GM12878 (cell line): ENCODE measurements at regions of chr4 and their contacts with region 1.

Region 1: DNA sequence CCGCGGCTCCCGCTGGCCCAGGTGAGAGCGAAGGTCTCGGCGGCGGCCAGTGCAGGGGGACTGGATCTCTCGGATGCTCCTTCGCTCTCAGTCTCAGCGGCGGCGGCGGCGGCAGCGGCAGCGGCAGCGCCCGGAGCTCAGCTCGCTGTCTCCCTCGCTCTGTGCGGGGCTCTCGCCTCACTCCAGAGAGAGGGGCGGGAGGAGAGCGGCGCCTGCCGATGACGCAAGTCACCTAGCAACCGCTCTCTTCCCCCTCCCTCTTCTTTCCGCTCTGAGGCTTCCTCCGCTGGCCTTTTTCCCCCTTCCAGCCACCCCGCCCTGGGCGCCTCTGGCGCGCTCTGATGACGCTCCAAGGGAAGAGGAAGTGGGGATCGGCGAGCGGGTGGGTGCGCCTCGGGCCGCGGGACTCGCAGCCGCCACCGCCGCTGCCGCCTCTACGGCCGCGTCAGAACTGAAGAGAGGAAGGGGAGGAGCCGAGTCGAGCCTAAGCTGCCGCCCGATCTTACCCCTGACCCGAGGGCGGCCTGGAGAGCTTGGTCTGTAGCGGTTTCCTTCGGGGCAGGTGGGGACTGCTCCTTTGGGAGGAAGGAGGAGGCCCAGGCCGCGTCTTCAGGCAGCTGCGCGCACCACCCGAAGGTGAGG is at the start of gene FBXW7:
- DNase-seq: peak; percentile 98
- ATAC-seq: peak; percentile 84
- H3K4me3 ChIP-seq: peak within 1 kb of the TSS; percentile 92
- H3K27ac ChIP-seq: peak within 1 kb of the TSS; percentile 96
- H3K4me1 ChIP-seq: peaks cover 21% of the 10 kb centered on the region
- H3K27me3 ChIP-seq: no peaks in the 10 kb centered on the region
- CTCF ChIP-seq: no peak
- EP300 ChIP-seq: peak in 1 of 2 experiments; percentile 75; a peak in 3 of 4 replicates
- POLR2A ChIP-seq: peak; percentile 90
- RAD21 ChIP-seq: no peak
- polyA plus RNA-seq, gene FBXW7: 40.2 to 42.5 TPM

Region 2: DNA sequence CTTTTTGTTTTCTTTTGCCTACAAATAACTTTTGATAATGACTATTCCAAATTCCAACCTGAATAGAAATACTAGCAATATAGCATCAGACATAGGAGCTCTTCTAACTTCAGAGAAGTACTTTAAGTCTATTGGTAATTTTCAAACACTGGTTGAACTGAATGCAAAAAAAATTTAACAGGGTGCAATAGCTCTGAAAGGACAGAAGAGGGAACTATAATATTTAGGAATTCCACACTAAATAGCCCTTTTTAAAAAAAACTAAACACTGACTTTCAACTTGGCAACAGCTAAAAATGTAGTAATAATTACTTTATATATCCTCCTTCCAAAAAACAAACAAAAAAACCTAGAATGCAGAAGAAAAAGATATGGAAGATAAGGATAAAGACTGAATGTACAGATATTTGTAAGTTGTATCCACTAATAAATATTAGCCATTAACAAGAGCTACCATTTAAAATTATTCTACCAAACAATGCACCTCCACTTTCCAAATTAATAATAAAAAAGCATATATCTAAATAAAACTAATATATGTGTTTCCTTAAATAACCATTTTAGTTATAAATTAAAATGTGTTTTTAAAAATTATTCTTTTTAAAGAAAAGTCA is 81.5 kb before region 1 on chr4:
- CTCF ChIA-PET with region 1: interaction called, 13 read pairs
- POLR2A ChIA-PET with region 1: interaction called, 7 read pairs
- RAD21 ChIA-PET with region 1: interaction called, 7 read pairs
- SMC1A ChIA-PET with region 1: interaction called, 17 read pairs
- in situ Hi-C with region 1: no loop called
- intact Hi-C with region 1: loop called (anchors 5 kb)
- DNase-seq: no peak
- ATAC-seq: peak; percentile 15; the same call in 2 of the 3 replicates
- H3K4me3 ChIP-seq: no peak overlapping the region
- H3K27ac ChIP-seq: no peak overlapping the region
- H3K4me1 ChIP-seq: peaks cover 12% of the 10 kb centered on the region
- H3K27me3 ChIP-seq: no peaks in the 10 kb centered on the region
- CTCF ChIP-seq: peak; percentile 50 to 60 (median 60)
- EP300 ChIP-seq: no peak
- POLR2A ChIP-seq: no peak
- RAD21 ChIP-seq: peak; percentile 65

Region 3: DNA sequence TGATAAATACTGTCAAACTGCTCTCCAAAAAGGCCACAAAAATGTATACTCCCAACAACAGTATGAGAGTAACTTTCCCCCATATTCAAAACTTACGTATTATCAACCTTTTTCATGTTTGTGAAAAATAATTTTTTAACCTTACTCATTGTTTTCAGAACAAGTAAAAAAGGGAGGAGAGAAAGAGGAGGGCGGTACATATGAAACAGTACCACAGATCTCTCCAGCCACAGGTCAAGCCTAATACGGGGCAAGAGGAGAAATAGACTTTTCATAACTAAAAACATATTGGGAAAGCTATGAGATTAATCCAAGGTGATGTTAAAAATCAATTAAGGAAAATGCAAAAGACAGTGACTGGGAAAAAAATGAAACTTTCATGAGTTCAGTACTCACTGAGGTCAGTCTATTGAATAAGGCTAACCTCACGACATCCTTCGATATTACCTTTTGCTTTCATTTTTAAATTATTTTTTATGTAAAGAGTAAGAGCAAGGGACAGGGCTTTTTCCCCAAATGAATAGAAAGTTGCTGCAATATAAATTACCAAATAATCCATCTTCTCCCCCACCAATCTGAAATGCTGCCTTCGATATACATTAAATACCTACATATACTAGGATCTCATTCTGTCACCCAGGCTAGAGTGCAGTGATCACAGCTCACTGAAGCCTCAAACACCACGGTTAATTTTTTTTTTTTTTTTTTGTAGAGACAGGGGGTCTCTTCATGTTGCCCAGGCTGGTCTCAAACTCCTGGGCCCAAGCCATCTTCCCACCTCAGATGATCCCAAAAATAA is 25.5 kb before region 1 on chr4:
- CTCF ChIA-PET with region 1: interaction called, 4 read pairs
- POLR2A ChIA-PET with region 1: interaction called, 93 read pairs
- RAD21 ChIA-PET with region 1: interaction called, 224 read pairs
- SMC1A ChIA-PET with region 1: interaction called, 197 read pairs
- in situ Hi-C with region 1: no loop called
- intact Hi-C with region 1: no loop called
- DNase-seq: no peak
- ATAC-seq: peak; percentile 71
- H3K4me3 ChIP-seq: peak overlapping the region; percentile 61; the same call in 1 of the 2 replicates
- H3K27ac ChIP-seq: peak overlapping the region; percentile 74
- H3K4me1 ChIP-seq: peaks cover 24% of the 10 kb centered on the region
- H3K27me3 ChIP-seq: no peaks in the 10 kb centered on the region
- CTCF ChIP-seq: no peak
- EP300 ChIP-seq: no peak
- POLR2A ChIP-seq: no peak
- RAD21 ChIP-seq: no peak

Region 4: DNA sequence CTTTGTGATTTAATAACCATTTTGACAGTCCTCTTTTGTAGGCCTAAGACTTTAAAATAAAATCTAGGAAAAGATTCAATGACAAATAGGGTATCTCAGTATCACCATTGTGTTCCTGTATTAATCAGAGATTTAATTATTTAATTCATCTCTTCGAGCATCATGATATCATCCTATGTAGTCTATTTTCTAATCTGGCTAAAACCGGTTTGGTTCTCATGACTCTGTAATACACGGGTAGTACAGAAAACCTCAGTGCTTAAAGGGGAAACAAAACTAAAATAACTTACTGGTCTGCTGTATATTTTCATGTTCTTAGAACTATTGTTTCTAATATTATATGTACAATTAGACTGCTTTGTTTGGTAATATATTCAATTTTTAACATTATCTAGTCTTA is 23.6 kb after region 1 on chr4:
- CTCF ChIA-PET with region 1: interaction called, 58 read pairs
- POLR2A ChIA-PET with region 1: interaction called, 228 read pairs
- RAD21 ChIA-PET with region 1: interaction called, 126 read pairs
- SMC1A ChIA-PET with region 1: interaction called, 231 read pairs
- in situ Hi-C with region 1: no loop called
- intact Hi-C with region 1: loop called (anchors 1 kb)
- DNase-seq: no peak
- ATAC-seq: peak; percentile 56
- H3K4me3 ChIP-seq: no peak overlapping the region
- H3K27ac ChIP-seq: peak overlapping the region; percentile 81
- H3K4me1 ChIP-seq: peaks cover 75% of the 10 kb centered on the region
- H3K27me3 ChIP-seq: no peaks in the 10 kb centered on the region
- CTCF ChIP-seq: no peak
- EP300 ChIP-seq: no peak
- POLR2A ChIP-seq: no peak
- RAD21 ChIP-seq: no peak

Region 5: DNA sequence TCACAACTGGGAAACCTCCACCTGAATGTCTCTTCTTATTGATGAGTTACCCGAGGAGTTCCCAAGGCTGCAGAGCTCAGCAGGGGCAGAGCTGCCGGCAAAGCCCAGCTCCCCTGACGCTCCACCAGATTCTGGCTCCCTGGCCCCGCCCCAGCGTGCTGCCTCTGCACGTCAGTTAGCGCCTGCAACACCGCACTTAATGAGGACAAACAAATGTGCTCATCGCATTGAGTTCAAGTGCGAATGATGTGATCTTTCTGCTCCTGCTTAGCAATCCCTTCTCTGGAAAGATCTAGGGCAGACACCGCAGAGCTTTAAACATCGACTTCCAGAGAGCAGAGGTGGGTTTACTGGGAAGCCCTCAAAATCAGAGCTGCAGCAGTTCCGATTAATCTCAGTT is 55.4 kb after region 1 on chr4:
- CTCF ChIA-PET with region 1: interaction called, 5 read pairs
- POLR2A ChIA-PET with region 1: no interaction called
- RAD21 ChIA-PET with region 1: interaction called, 4 read pairs
- SMC1A ChIA-PET with region 1: interaction called, 12 read pairs
- in situ Hi-C with region 1: no loop called
- intact Hi-C with region 1: no loop called
- DNase-seq: no peak
- ATAC-seq: peak; percentile 61
- H3K4me3 ChIP-seq: no peak overlapping the region
- H3K27ac ChIP-seq: no peak overlapping the region
- H3K4me1 ChIP-seq: peaks cover 18% of the 10 kb centered on the region
- H3K27me3 ChIP-seq: no peaks in the 10 kb centered on the region
- CTCF ChIP-seq: no peak
- EP300 ChIP-seq: no peak
- POLR2A ChIP-seq: no peak
- RAD21 ChIP-seq: no peak

Region 6: DNA sequence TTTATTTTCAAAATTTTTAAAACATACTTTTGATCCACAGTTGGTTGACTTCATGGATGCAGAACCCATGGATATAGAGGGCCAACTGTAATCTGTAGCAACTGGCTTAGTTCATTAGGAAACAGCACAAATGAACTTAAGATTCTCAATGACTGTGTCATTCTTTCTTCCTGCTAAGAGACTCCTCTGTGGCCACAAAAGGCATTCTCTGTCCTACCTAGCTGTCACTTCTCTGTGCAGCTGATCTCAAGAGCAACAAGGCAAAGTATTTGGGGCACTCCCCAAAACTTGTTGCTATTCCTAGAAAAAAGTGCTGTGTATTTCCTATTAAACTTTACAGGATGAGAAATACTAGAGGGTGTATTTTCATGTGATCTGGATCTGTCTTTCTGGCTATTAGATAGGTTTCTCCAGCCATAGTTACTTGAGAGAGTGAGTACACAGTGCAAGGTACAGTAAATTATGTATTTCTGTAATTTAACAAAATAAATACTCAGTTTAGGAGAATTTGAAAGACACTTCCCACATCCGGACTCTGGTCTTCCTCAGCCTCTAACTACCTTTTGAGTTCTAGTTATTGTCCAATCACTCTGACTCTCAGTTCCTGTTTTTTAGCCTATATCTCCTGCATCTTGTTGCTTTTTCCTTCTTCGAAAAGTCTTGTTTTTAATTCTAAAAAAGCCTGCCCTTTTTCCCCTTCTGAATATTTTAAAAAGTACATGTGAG is 1169.9 kb after region 1 on chr4:
- CTCF ChIA-PET with region 1: no interaction called
- POLR2A ChIA-PET with region 1: no interaction called
- RAD21 ChIA-PET with region 1: no interaction called
- SMC1A ChIA-PET with region 1: no interaction called
- in situ Hi-C with region 1: no loop called
- intact Hi-C with region 1: no loop called
- DNase-seq: peak; percentile 38
- ATAC-seq: peak; percentile 74
- H3K4me3 ChIP-seq: no peak overlapping the region
- H3K27ac ChIP-seq: no peak overlapping the region
- H3K4me1 ChIP-seq: no peaks in the 10 kb centered on the region; the same call in 1 of the 2 replicates
- H3K27me3 ChIP-seq: no peaks in the 10 kb centered on the region; a peak in 1 of 4 replicates
- CTCF ChIP-seq: no peak
- EP300 ChIP-seq: no peak
- POLR2A ChIP-seq: no peak
- RAD21 ChIP-seq: no peak